Activated B cell treated with CpG ODN at 0.5 μM for 24 hours (primary cell): ENCODE measurements at regions of chr15 and their contacts with region 1.

Region 1: DNA sequence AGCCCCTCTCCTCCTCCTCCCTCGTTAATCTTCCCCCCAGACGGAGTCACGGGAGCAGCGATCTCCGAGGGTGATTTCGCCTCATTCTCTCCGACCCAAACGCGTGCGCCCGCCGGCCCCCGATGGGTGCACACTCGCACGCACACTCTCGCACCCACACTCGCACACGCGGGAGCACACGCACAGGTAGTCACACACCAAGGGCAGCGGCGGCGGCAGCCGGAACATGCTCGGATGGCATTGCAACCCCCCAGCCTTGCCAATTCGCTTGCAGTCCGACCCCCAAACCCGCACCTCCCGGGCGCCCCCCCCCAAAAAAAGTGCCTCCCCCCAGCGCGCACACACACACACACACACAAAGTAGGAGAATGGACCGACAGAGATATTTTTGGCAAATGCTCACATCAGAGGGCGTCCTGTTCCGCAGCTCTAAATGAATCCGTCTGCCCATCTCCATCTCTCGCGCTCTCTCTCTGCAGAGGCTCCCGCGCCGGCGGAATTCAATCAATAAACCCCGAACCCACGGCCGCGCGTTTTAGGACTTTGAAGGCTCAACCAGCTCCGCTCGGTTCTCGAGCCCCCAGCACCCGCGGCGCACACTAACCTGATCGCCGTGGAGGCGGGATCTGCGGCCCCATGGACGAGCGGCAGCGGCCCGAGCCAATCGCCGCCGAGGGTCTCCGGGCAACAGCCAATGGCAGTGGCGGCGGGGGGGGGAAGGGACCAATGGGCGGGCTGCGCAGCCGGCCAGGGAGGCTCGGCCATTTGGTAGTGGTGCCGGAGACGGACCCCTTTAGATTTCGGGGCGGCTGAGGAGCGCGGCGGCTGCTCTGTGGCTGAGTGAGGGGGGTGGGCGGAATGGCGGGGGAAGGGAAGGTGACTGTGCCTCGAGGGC is at the start of gene ANP32A:
- DNase-seq: peak; percentile 99
- ATAC-seq: peak; percentile 72
- H3K4me3 Mint-ChIP-seq: peak within 1 kb of the TSS; percentile 97
- H3K27ac Mint-ChIP-seq: peak within 1 kb of the TSS; percentile 97
- H3K4me1 Mint-ChIP-seq: peaks cover 32% of the 10 kb centered on the region
- H3K27me3 Mint-ChIP-seq: no peaks in the 10 kb centered on the region
- CTCF ChIP-seq: no peak
- total RNA-seq, gene ANP32A: 199 and 218 TPM in 2 replicates

Region 2: GRCh38 chr15:67109141-67110034 is 1711.2 kb before region 1 on chr15:
- CTCF ChIA-PET with region 1: no interaction called
- POLR2A ChIA-PET with region 1: no interaction called
- intact Hi-C with region 1: loop called (anchors 10 kb)
- DNase-seq: peak; percentile 76
- ATAC-seq: peak; percentile 83
- H3K4me3 Mint-ChIP-seq: peak overlapping the region; percentile 67
- H3K27ac Mint-ChIP-seq: peak overlapping the region; percentile 92
- H3K4me1 Mint-ChIP-seq: peaks cover 14% of the 10 kb centered on the region
- H3K27me3 Mint-ChIP-seq: no peaks in the 10 kb centered on the region
- CTCF ChIP-seq: no peak

Region 3: GRCh38 chr15:68218847-68219798 is 601.4 kb before region 1 on chr15:
- CTCF ChIA-PET with region 1: no interaction called
- POLR2A ChIA-PET with region 1: no interaction called
- intact Hi-C with region 1: no loop called
- DNase-seq: no peak
- ATAC-seq: no peak
- H3K4me3 Mint-ChIP-seq: no peak overlapping the region
- H3K27ac Mint-ChIP-seq: no peak overlapping the region
- H3K4me1 Mint-ChIP-seq: peaks cover 2% of the 10 kb centered on the region
- H3K27me3 Mint-ChIP-seq: no peaks in the 10 kb centered on the region
- CTCF ChIP-seq: no peak

Region 4: DNA sequence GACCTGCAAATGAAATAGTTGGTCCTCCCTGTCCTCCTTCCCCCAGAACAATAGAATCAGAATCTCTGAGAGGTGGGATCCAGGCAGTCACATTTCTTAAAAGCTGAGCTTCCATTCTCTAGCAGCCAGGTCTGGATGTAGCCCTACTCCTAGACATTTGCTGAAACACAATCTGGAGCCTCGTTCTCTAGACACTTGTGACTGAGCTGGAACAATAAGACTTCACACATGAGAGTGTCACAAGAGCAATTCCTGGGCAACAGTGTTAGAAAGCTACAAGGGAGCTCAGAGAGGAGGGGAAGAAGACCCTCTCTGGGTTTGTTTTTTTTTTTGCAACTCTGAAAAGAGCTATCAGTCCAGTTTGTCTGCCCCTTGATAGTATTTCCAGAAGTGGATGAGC is 227.2 kb before region 1 on chr15:
- CTCF ChIA-PET with region 1: no interaction called
- POLR2A ChIA-PET with region 1: interaction called, 11 read pairs
- intact Hi-C with region 1: no loop called
- DNase-seq: no peak
- ATAC-seq: no peak
- H3K4me3 Mint-ChIP-seq: no peak overlapping the region
- H3K27ac Mint-ChIP-seq: no peak overlapping the region
- H3K4me1 Mint-ChIP-seq: peaks cover 43% of the 10 kb centered on the region
- H3K27me3 Mint-ChIP-seq: peaks cover 1% of the 10 kb centered on the region
- CTCF ChIP-seq: no peak

Region 5: DNA sequence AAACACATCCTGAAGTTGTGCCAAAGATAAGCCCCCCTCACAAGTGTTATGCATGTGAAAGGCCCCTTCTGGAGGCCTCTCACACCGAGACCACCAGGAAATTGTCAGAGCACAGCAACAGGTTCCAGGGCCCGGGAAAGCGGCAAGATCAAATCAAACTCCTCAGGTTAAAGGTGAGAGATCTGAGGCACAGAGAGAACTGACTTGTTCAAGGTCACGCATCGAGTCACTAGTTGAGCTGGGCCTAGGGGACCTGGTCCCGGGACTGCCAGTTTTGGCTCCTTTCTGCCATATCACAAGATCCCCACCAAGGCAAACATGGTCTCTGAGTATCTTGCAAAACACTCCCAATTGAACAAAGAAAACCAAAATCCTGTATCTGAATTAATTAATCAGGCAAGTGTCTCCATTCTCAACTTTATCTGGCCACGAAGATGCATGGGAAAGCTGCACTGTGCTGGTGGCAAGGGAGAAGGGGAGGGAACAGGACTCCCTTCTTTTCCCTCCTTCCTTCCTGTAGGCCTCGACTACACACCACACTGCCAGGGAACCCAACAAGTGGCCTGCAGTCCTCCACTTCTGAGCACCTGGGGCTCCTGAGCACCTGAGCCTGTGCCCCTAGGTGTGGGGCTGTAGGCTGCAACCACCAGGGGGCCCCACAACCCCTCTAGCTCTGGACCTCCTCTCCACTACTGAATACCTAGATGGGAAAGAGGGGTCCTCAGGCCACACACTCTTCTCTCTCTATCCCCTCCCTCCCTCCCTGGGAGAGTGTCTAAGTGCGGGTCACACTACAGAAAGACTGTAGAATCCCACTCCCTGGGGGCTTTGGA is 37.1 kb before region 1 on chr15:
- CTCF ChIA-PET with region 1: interaction called, 7 read pairs
- POLR2A ChIA-PET with region 1: interaction called, 21 read pairs
- intact Hi-C with region 1: loop called (anchors 2 kb)
- DNase-seq: peak; percentile 48
- ATAC-seq: peak; percentile 84
- H3K4me3 Mint-ChIP-seq: no peak overlapping the region
- H3K27ac Mint-ChIP-seq: no peak overlapping the region
- H3K4me1 Mint-ChIP-seq: peaks cover 31% of the 10 kb centered on the region
- H3K27me3 Mint-ChIP-seq: no peaks in the 10 kb centered on the region
- CTCF ChIP-seq: no peak

Region 6: GRCh38 chr15:68910816-68911215 is 90.3 kb after region 1 on chr15:
- CTCF ChIA-PET with region 1: no interaction called
- POLR2A ChIA-PET with region 1: no interaction called
- intact Hi-C with region 1: no loop called
- DNase-seq: no peak
- ATAC-seq: no peak
- H3K4me3 Mint-ChIP-seq: no peak overlapping the region
- H3K27ac Mint-ChIP-seq: no peak overlapping the region
- H3K4me1 Mint-ChIP-seq: no peaks in the 10 kb centered on the region
- H3K27me3 Mint-ChIP-seq: peaks cover 15% of the 10 kb centered on the region
- CTCF ChIP-seq: no peak

Region 7: DNA sequence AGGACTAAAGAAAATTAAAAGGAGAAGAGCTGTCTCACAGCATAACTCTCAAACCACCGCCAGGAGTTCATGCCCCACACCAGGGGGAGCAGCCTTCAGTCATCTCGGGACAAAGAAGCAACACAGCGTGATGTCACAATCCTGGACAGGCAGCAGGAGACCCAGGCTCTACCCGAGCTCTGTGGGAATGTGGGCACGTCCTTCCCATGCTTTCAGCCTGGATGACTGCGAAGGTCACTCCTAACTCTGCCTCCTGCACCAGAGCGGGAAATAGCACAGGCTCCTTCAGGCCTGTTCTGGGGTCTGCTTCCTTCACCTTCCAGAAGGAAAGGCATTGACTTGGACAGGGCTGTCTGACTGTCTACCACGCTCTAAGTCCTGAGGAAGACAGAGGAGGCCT is 225.3 kb after region 1 on chr15:
- CTCF ChIA-PET with region 1: no interaction called
- POLR2A ChIA-PET with region 1: no interaction called
- intact Hi-C with region 1: no loop called
- DNase-seq: no peak
- ATAC-seq: no peak
- H3K4me3 Mint-ChIP-seq: no peak overlapping the region
- H3K27ac Mint-ChIP-seq: no peak overlapping the region
- H3K4me1 Mint-ChIP-seq: no peaks in the 10 kb centered on the region
- H3K27me3 Mint-ChIP-seq: peaks cover 7% of the 10 kb centered on the region
- CTCF ChIP-seq: no peak

Region 8: GRCh38 chr15:69452692-69453521 is 632.4 kb after region 1 on chr15 and contains the start of gene RPLP1:
- CTCF ChIA-PET with region 1: no interaction called
- POLR2A ChIA-PET with region 1: interaction called, 13 read pairs
- intact Hi-C with region 1: loop called (anchors 10 kb)
- DNase-seq: peak; percentile 94
- ATAC-seq: peak; percentile 90
- H3K4me3 Mint-ChIP-seq: peak within 1 kb of the TSS; percentile 98
- H3K27ac Mint-ChIP-seq: peak within 1 kb of the TSS; percentile 99
- H3K4me1 Mint-ChIP-seq: peaks cover 46% of the 10 kb centered on the region
- H3K27me3 Mint-ChIP-seq: no peaks in the 10 kb centered on the region
- CTCF ChIP-seq: no peak
- total RNA-seq, gene RPLP1: 3,035 and 3,437 TPM in 2 replicates